Mucosa of descending colon (tissue), 3 donors: ENCODE measurements at regions of chr11 and their contacts with region 1.

Region 1: GRCh38 chr11:100855466-100856067 is 168.5 kb downstream of the ARHGAP42 start:
- DNase-seq: no peak
- ATAC-seq: no peak
- H3K4me3 ChIP-seq: no peak overlapping the region
- H3K4me1 ChIP-seq: no peaks in the 10 kb centered on the region
- CTCF ChIP-seq: no peak

Region 2: DNA sequence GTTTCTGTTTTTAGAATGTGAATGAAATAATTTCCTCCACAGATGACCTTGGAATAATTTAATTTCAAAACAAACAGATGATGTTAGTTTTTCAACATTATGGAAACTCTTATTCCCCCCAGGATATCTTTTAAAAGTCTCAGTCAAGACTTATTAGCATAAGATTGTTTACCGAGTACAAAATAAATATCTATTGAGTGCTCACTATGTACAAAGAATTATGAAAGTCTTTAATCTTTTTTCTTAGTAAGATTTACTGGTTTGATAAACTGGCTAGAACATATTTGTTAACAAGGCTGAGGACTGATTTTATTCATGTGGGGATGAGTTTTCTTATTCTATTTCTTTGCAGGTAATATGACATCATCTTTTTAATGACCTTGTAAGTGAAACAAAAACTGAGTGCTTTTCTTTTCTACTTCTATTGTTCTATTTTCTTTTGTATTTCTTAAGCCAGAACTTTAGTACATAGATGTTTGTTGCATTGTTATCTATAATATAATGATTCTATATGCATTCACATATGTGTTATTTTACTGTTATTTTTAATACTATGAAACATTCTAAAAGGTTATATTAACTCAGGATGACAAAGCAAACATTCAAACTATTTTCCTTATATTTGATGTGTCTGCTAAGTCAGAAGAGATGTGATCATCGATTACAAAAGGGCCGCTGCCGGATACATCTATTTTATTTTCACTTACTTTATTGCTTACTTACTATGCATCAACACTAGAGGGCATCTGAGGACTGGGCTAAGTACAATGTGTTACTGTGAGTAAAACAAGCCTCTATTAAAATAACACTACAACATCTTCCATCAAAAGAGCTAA is 279.5 kb before region 1 on chr11:
- intact Hi-C with region 1: loop called (anchors 5 kb)
- DNase-seq: peak in 1 of 3 donors; percentile 46
- ATAC-seq: peak; percentile 67
- H3K4me3 ChIP-seq: no peak overlapping the region
- H3K4me1 ChIP-seq: no peaks in the 10 kb centered on the region
- CTCF ChIP-seq: no peak

Region 3: GRCh38 chr11:100681064-100681502 is 174.5 kb before region 1 on chr11:
- intact Hi-C with region 1: loop called (anchors 5 kb)
- DNase-seq: peak; percentile 83 to 88 (median 84)
- ATAC-seq: peak; percentile 98
- H3K4me3 ChIP-seq: no peak overlapping the region
- H3K4me1 ChIP-seq: peaks cover 6% of the 10 kb centered on the region
- CTCF ChIP-seq: no peak

Region 4: GRCh38 chr11:100687630-100688395 is 167.8 kb before region 1 on chr11:
- intact Hi-C with region 1: loop called (anchors 5 kb)
- DNase-seq: peak; percentile 56 to 69 (median 69)
- ATAC-seq: peak; percentile 83
- H3K4me3 ChIP-seq: peak overlapping the region; percentile 52
- H3K4me1 ChIP-seq: no peaks in the 10 kb centered on the region
- CTCF ChIP-seq: peak; percentile 27

Region 5: DNA sequence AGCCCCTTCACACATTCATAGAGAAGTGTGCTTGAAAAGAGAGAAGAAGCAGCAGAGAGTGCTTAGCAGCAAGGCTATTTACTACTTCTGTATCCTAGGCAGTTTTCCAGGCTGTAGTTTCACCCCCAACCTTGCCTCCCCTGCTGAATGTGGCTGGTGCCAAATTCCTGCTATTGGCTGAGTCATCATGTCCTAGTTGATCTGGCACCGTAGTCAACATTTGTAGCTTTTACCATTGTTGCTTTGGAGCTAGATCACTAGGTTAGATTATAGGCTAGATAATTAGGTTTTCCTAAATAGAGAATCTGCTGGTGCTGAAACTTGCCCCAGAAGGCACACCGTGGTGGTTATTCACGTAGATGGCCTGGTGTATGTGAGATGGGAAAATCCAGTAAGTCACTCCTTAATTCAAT is 135.8 kb before region 1 on chr11:
- intact Hi-C with region 1: no loop called
- DNase-seq: peak in 1 of 3 donors; percentile 36
- ATAC-seq: peak; percentile 88
- H3K4me3 ChIP-seq: no peak overlapping the region
- H3K4me1 ChIP-seq: peaks cover 14% of the 10 kb centered on the region
- CTCF ChIP-seq: no peak

Region 6: GRCh38 chr11:100948936-100949335 is 93.4 kb after region 1 on chr11:
- intact Hi-C with region 1: no loop called
- DNase-seq: no peak
- ATAC-seq: no peak
- H3K4me3 ChIP-seq: no peak overlapping the region
- H3K4me1 ChIP-seq: no peaks in the 10 kb centered on the region
- CTCF ChIP-seq: no peak